B cell (primary cell): ENCODE measurements at regions of chr9 and their contacts with region 1.

Region 1: GRCh38 chr9:76987594-76988200 is 31.8 kb upstream of the FOXB2 start:
- DNase-seq: peak; percentile 7
- ATAC-seq: peak; percentile 21
- H3K4me3 ChIP-seq: no peak overlapping the region
- H3K4me3 Mint-ChIP-seq: no peak overlapping the region
- H3K27ac ChIP-seq: no peak overlapping the region
- H3K27ac Mint-ChIP-seq: no peak overlapping the region
- H3K4me1 ChIP-seq: no peaks in the 10 kb centered on the region
- H3K4me1 Mint-ChIP-seq: no peaks in the 10 kb centered on the region
- H3K27me3 ChIP-seq: peaks cover 0 to 8% (median 1%) of the 10 kb centered on the region in 4 experiments
- H3K27me3 Mint-ChIP-seq: peaks cover 19% of the 10 kb centered on the region
- CTCF ChIP-seq: peak; percentile 31

Region 2: DNA sequence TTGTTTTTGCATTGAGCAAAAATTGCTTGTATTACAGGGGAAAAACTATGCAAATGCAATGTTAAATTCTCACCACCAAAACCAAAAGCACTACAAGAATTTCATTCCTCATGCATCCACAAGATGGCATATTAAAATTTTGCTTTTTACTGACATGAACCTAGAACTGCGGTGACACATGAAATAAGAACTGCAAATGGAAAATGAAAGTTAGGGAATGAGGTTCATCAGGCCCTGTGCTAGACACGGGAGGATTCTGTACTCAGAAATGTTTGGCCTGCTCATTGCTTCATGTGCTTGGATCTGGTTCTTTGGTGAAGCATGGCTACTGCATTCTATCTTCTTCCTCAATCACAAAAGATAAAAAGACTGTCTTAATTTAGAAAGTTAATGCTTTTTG is 584.3 kb before region 1 on chr9:
- CTCF ChIA-PET with region 1: no interaction called
- POLR2A ChIA-PET with region 1: no interaction called
- intact Hi-C with region 1: loop called (anchors 5 kb)
- DNase-seq: peak; percentile 70
- ATAC-seq: peak; percentile 69
- H3K4me3 ChIP-seq: peak overlapping the region in 1 of 5 experiments; percentile 37
- H3K4me3 Mint-ChIP-seq: peak overlapping the region; percentile 40
- H3K27ac ChIP-seq: peak overlapping the region in 1 of 2 donors; percentile 20
- H3K27ac Mint-ChIP-seq: peak overlapping the region; percentile 10
- H3K4me1 ChIP-seq: peaks cover 0 to 3% of the 10 kb centered on the region in 2 donors
- H3K4me1 Mint-ChIP-seq: peaks cover 12% of the 10 kb centered on the region
- H3K27me3 ChIP-seq: no peaks in the 10 kb centered on the region
- H3K27me3 Mint-ChIP-seq: no peaks in the 10 kb centered on the region
- CTCF ChIP-seq: peak; percentile 73

Region 3: DNA sequence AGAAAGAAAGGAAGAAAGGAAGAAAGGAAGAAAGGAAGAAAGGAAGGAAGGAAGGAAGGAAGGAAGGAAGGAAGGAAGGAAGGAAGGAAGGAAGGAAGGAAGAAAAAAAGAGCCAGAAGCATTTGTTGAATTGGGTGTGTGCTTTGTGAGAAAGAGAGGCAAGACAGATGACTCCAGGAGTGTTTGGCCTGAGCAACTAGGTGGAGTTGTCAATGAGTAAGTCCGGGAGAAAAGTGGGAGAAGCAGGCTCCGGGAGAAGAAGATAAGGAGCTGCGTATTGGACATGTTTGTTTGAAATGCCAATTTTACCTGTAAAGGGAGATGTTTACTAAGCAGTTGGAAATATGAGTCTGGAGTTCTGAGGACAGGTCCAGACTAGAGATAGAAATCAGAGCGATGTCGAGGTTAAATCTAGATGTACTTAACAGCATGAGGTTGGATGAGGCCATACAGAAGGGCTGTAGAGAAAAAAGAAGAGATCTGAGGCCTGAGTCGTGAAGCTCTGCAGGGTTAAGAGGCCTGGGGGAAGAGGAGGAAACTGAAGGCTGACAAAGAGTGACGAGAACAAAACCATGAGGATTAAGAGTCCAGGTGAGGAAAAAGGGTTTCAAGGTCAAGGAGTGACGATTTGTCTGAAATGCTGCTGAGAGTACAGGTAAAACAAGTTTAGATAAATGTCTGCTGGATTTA is 543.7 kb before region 1 on chr9:
- CTCF ChIA-PET with region 1: no interaction called
- POLR2A ChIA-PET with region 1: no interaction called
- intact Hi-C with region 1: loop called (anchors 5 kb)
- DNase-seq: no peak
- ATAC-seq: no peak
- H3K4me3 ChIP-seq: no peak overlapping the region
- H3K4me3 Mint-ChIP-seq: no peak overlapping the region
- H3K27ac ChIP-seq: no peak overlapping the region
- H3K27ac Mint-ChIP-seq: no peak overlapping the region
- H3K4me1 ChIP-seq: peaks cover 3 to 5% of the 10 kb centered on the region in 2 donors
- H3K4me1 Mint-ChIP-seq: peaks cover 2% of the 10 kb centered on the region
- H3K27me3 ChIP-seq: no peaks in the 10 kb centered on the region
- H3K27me3 Mint-ChIP-seq: no peaks in the 10 kb centered on the region
- CTCF ChIP-seq: no peak

Region 4: GRCh38 chr9:76667521-76667957 is 320.2 kb before region 1 on chr9:
- CTCF ChIA-PET with region 1: interaction called, 4 read pairs
- POLR2A ChIA-PET with region 1: no interaction called
- intact Hi-C with region 1: loop called (anchors 5 kb)
- DNase-seq: no peak
- ATAC-seq: no peak
- H3K4me3 ChIP-seq: no peak overlapping the region
- H3K4me3 Mint-ChIP-seq: no peak overlapping the region
- H3K27ac ChIP-seq: no peak overlapping the region
- H3K27ac Mint-ChIP-seq: no peak overlapping the region
- H3K4me1 ChIP-seq: no peaks in the 10 kb centered on the region
- H3K4me1 Mint-ChIP-seq: no peaks in the 10 kb centered on the region
- H3K27me3 ChIP-seq: no peaks in the 10 kb centered on the region
- H3K27me3 Mint-ChIP-seq: peaks cover 12% of the 10 kb centered on the region
- CTCF ChIP-seq: no peak